Right cardiac atrium (tissue), 5 donors: ENCODE measurements at regions of chr10 and their contacts with region 1.

Region 1: GRCh38 chr10:68156373-68157185 is 47.3 kb downstream of the MYPN start:
- DNase-seq: peak in 2 of 3 donors; percentile 35 to 66
- ATAC-seq: peak in 1 of 2 donors; percentile 36
- H3K4me3 ChIP-seq: no peak overlapping the region
- H3K27ac ChIP-seq: no peak overlapping the region
- H3K4me1 ChIP-seq: peaks cover 7% of the 10 kb centered on the region
- H3K27me3 ChIP-seq: no peaks in the 10 kb centered on the region

Region 2: DNA sequence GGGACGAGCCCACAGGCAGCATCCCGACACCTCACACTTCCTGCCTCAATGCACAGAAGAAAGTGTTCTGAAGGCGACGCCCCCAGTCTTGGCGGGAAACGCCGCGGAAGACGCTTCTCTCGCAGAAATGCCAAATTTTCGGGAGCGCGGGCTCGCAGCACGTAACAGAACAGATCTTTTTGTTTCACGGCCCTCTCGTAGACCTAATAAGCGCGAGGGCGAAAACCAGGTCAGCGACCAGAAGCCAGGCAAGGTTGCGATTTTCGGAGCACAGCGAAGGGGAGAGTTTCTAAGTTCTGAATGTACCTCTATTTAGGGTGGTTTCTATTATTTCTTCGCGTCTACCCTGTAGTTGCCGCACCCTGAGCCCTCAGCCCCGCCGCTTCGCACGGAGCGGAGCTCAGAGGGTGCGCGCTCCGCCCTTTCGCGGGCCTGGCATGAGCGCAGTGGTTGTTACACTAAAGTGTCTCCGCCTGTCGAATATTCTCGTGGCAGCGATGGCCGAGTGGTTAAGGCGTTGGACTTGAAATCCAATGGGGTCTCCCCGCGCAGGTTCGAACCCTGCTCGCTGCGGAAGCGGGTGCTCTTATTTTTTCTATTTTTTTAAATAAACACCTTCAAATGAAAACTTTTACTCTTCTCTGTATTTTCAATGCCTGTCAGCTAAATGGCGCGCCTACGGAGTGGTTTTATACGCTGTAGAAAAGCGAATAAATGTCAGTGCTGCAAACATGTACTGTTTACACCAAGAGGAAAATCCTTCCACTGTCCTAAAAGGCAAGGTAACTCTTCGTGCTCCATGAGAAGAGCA is 392.4 kb before region 1 on chr10:
- intact Hi-C with region 1: no loop called
- DNase-seq: peak; percentile 90 to 96 (median 95)
- ATAC-seq: peak; percentile 97
- H3K4me3 ChIP-seq: peak overlapping the region; percentile 98
- H3K27ac ChIP-seq: peak overlapping the region; percentile 91
- H3K4me1 ChIP-seq: no peaks in the 10 kb centered on the region
- H3K27me3 ChIP-seq: no peaks in the 10 kb centered on the region

Region 3: GRCh38 chr10:67861750-67862460 is 294.7 kb before region 1 on chr10:
- intact Hi-C with region 1: loop called in 3 of 4 experiments (anchors 2 to 5 kb)
- DNase-seq: no peak
- ATAC-seq: no peak
- H3K4me3 ChIP-seq: no peak overlapping the region
- H3K27ac ChIP-seq: no peak overlapping the region
- H3K4me1 ChIP-seq: no peaks in the 10 kb centered on the region
- H3K27me3 ChIP-seq: no peaks in the 10 kb centered on the region

Region 4: DNA sequence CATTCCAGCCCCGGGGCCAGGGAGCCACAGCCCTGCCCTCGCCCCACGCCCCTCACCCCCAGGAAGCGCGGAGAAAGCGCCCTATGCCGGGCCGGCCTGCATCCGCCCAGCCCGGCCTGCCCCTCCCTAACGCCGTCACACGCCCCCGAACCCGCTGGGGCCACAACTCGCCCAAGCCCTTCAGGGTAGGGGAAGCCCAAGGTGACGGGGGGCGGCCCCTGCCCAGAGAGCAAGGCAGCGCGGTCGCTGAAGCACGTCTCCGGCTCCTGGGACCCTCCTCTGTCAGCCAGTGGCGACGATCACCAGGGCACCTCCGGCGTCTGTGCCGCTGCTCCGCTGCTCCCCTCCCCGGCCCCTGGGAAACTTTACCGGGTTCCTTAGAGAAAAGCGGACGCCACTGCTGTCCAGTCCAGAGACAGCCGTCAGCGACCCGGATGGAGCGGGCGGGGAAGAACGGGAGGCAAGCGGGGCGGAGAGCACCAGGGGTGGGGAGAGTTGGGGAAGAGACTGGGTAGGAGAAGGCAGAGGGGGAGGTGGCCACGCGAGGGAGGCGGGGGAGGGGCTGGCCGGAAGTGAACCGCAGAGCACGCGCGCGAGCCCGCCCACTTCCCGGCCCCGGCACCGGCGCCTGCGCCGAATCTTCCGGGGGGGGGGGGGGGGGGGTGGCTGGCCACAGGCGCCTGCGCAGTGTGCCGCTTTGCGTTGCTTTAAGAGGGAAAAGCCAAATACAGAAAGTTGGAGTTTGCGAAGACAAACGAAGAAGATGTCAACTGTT is 81.6 kb before region 1 on chr10 and contains the start of gene HERC4:
- intact Hi-C with region 1: loop called in 2 of 4 experiments (anchors 5 kb)
- DNase-seq: peak; percentile 94 to 98 (median 98)
- ATAC-seq: peak; percentile 99
- H3K4me3 ChIP-seq: peak within 1 kb of the TSS; percentile 53
- H3K27ac ChIP-seq: peak within 1 kb of the TSS; percentile 83
- H3K4me1 ChIP-seq: peaks cover 3% of the 10 kb centered on the region
- H3K27me3 ChIP-seq: no peaks in the 10 kb centered on the region
- total RNA-seq, gene HERC4: 33.2 to 37.0 (median 34.5) TPM

Region 5: DNA sequence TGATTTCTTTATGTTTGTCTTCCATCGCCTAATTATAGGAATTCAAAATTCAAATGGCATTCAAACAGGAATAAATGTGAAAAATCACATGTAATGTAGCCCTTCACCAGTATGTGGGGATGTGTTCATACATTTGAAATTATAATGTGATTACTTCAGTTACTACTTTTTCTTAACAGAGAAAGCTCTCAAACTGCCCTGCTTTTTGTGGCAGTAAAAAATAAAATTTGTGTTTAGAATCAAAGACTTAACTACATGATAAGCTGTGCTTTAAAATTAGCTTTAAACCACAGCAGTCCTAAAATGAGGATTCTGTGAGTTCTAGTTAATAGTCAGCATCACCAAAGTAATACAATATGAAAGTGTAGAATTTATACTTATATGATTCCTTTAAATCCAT is 73.7 kb before region 1 on chr10:
- intact Hi-C with region 1: loop called in 3 of 4 experiments (anchors 2 to 5 kb)
- DNase-seq: no peak
- ATAC-seq: peak in 1 of 2 donors; percentile 38
- H3K4me3 ChIP-seq: no peak overlapping the region
- H3K27ac ChIP-seq: no peak overlapping the region
- H3K4me1 ChIP-seq: no peaks in the 10 kb centered on the region
- H3K27me3 ChIP-seq: no peaks in the 10 kb centered on the region